Mammary epithelial cell (primary cell): ENCODE measurements at regions of chr7 and their contacts with region 1.

Region 1: DNA sequence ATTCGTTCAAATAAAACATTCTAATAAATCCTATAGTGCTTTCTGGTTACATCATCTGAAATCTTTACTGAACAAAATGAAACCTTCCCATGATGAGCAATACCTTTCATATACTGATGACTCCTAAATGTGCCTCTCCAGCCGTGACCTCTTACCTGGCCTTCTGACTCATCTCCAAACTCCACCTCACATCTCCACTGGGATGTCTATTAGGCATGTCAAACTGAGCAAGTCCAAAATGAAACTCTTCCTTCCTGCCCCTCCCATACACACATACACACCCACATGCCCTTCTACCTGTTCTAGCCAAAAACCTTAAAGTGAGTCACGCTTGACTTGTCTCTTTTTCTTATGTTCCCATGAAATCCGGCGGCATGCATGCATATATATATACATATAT is 22.9 kb downstream of the GSAP start:
- DNase-seq: peak; percentile 100
- H3K4me3 ChIP-seq: no peak overlapping the region
- H3K27ac ChIP-seq: peak overlapping the region; percentile 90
- H3K4me1 ChIP-seq: peaks cover 22% of the 10 kb centered on the region
- H3K27me3 ChIP-seq: no peaks in the 10 kb centered on the region
- CTCF ChIP-seq: no peak

Region 2: DNA sequence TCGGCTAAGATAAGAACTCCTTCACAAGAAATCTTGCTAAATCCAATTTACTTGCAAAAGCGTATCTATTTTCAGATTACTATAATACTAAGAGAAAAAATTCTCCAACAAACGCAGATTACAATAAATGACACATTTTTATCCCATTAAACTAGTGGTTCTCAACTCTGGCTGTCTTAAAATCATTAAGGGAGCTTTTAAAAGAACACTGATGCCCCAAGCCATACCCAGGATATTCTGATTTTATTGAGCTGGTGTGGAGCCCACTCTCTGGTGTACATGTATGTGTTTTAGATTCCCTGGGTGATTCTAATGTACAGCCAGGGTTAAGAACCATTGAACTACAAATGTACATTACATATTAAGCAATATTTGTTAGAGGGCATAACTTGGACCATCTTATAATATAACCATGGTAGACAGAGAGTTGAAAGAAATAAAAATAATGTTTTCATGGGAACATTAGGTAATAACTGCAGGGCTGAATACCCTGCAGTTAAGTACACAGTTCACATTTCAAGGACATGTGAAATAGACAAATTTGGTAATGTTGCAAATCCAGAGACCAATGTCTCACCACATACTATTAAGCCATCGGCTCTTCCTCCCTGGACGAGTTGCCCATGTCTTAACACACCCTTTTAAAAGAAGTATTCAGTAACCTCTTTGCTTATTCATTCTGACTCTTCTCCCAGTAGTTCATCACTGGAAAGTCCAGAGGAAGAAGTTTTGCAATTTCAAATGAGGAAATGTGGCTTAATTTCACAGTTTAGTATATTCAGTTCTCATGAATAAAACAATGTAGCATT is 16.7 kb after region 1 on chr7:
- CTCF ChIA-PET with region 1: no interaction called
- dilution Hi-C with region 1: no loop called
- in situ Hi-C with region 1: no loop called
- intact Hi-C with region 1: loop called (anchors 1 kb)
- DNase-seq: peak; percentile 96
- H3K4me3 ChIP-seq: no peak overlapping the region
- H3K27ac ChIP-seq: peak overlapping the region; percentile 99
- H3K4me1 ChIP-seq: peaks cover 29% of the 10 kb centered on the region
- H3K27me3 ChIP-seq: no peaks in the 10 kb centered on the region
- CTCF ChIP-seq: no peak

Region 3: GRCh38 chr7:77415823-77416622 is 22.8 kb after region 1 on chr7 and contains the start of gene GSAP:
- CTCF ChIA-PET with region 1: no interaction called
- dilution Hi-C with region 1: no loop called
- in situ Hi-C with region 1: no loop called
- intact Hi-C with region 1: loop called (anchors 1 kb)
- DNase-seq: peak; percentile 61
- H3K4me3 ChIP-seq: peak within 1 kb of the TSS; percentile 53 to 70 (median 61)
- H3K27ac ChIP-seq: peak within 1 kb of the TSS; percentile 31
- H3K4me1 ChIP-seq: peaks cover 29% of the 10 kb centered on the region
- H3K27me3 ChIP-seq: no peaks in the 10 kb centered on the region
- CTCF ChIP-seq: no peak
- total RNA-seq, gene GSAP: 7.9 to 10.3 TPM

Region 4: DNA sequence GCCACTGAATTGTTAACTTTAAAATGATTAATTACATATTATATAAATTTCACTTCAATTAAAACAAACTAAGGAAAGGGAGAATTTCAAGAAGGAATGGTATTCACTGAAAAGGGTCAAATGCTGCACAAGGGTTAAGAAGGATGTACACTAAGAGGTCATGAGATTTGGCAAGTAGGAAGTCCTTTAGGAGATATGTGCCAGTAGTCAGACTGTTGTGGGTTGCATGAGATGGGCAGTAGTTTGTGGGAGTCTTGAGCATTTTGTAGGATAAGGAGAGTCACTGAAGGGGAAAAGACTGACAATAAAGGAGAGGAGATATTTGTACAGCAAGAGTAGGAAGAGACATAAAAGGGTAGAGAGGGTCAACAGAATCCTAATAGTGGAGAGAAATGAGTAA is 131.5 kb after region 1 on chr7:
- CTCF ChIA-PET with region 1: no interaction called
- dilution Hi-C with region 1: no loop called
- in situ Hi-C with region 1: no loop called
- intact Hi-C with region 1: no loop called
- DNase-seq: no peak
- H3K4me3 ChIP-seq: no peak overlapping the region
- H3K27ac ChIP-seq: peak overlapping the region; percentile 27
- H3K4me1 ChIP-seq: peaks cover 18% of the 10 kb centered on the region
- H3K27me3 ChIP-seq: no peaks in the 10 kb centered on the region
- CTCF ChIP-seq: no peak